Motor neuron (in vitro differentiated cells): ENCODE measurements at regions of chr6 and their contacts with region 1.

Region 1: GRCh38 chr6:31541658-31542521 is at the start of gene DDX39B:
- ATAC-seq: peak; percentile 70 to 83 (median 76)
- H3K4me3 ChIP-seq: peak within 1 kb of the TSS; percentile 53 to 91 (median 69)
- H3K27ac ChIP-seq: peak within 1 kb of the TSS; percentile 87 to 95
- H3K4me1 ChIP-seq: peaks cover 22 to 29% of the 10 kb centered on the region in 2 donors
- total RNA-seq, gene DDX39B: 238 to 564 (median 386) TPM

Region 2: DNA sequence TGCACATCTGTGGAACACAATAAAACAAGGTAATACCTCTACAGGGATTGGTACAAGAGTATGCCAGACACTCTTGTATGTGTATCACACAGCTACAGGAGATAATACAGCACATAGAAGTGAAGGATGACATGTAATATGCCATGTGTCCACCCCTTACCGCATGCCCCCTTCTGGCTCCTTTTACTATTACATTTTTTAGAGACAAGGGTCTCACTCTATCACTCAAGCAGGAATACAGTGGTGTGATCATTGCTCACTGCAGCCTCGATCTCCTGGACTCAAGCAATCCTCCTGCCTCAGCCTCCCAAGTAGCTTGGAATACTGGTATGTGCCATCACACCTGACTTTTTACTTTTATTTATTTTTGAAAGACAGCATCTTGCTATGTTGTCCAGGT is 55.1 kb after region 1 on chr6:
- in situ Hi-C with region 1: loop called in 2 of 9 experiments (anchors 10 kb)
- ATAC-seq: peak in 4 of 8 experiments; percentile 24 to 77 (median 42)
- H3K4me3 ChIP-seq: no peak overlapping the region
- H3K27ac ChIP-seq: no peak overlapping the region
- H3K4me1 ChIP-seq: no peaks in the 10 kb centered on the region

Region 3: DNA sequence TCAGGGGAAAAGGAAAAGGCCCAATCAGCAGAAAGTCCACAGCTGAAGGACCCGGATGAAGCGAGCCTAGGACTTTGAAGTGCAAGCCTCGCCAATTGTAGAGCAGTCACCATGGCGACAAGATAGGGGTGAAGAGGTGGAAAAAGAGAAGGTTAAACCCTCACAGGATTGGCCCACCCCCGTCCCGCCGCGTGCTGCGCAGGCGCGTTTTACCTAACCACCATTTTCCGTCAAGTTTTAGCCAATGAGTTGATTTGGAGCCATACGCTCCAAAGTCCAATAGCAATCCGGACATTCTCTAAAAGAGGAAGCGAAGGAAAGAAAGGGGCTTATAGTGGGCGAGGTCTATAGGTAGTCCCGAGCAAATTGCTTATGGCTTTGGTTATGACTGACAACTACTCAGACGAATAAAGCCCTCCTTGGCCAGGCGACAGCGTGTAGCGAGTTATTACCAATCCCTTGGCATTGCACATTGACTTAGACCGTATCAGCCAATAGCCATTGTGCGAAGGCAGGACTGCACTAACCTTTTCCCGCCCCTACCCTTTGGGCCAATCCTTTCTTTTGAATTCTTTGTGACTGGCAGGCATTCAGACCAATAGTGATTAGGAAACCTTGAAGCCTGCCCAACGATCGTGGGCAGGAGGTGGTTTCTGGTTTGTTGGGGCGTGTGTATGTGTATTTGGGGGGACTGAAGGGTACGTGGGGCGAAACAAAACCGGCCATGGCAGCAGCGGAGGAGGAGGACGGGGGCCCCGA is 636.1 kb after region 1 on chr6 and contains the start of gene RNF5:
- in situ Hi-C with region 1: loop called in 1 of 9 experiments (anchors 25 kb)
- ATAC-seq: peak; percentile 75 to 87 (median 83)
- H3K4me3 ChIP-seq: peak within 1 kb of the TSS; percentile 85 to 99 (median 97)
- H3K27ac ChIP-seq: peak within 1 kb of the TSS; percentile 90 to 94
- H3K4me1 ChIP-seq: peaks cover 11 to 12% of the 10 kb centered on the region in 2 donors
- total RNA-seq, gene RNF5: 40.1 to 152 (median 98.5) TPM